H1 (cell line): ENCODE measurements at regions of chr3 and their contacts with region 1.

Region 1: GRCh38 chr3:51498876-51499738 is 708 bp downstream of the DCAF1 start:
- DNase-seq: peak; percentile 87 to 96
- H3K4me3 ChIP-seq: peak overlapping the region; percentile 69 to 84 (median 75)
- H3K27ac ChIP-seq: peak overlapping the region; percentile 88
- H3K4me1 ChIP-seq: no peaks in the 10 kb centered on the region
- H3K27me3 ChIP-seq: 0 out of 7 replicates have a peak, but pooled peaks cover 0 to 2% (median 0%) of the 10 kb centered on the region in 4 experiments
- CTCF ChIP-seq: no peak
- EP300 ChIP-seq: 0 out of 3 replicates have a peak, but pooled peaks of 1 of the 2 experiments have one; percentile 31
- POLR2A ChIP-seq: peak in 1 of 2 experiments; percentile 88; a peak in 2 of 3 replicates
- RAD21 ChIP-seq: no peak

Region 2: DNA sequence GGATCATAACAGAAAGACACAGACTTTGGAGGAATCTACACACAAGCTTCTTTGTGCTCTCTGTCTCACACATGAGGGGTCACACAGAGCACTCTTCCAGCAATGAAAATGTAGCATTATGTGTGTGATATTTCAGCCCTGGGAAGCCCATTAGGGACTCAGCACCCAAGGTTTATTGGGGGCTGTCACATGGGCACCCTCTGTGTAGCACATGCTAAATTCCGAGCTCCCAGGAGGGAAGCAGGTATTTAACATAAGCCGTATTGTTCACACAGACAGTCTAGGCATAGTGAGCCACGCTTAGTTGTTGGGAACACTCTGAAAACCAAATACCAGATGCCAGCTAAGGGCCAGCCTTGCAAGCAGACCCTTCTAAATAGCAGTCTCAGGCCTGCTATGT is 375.6 kb before region 1 on chr3:
- CTCF ChIA-PET with region 1: no interaction called
- POLR2A ChIA-PET with region 1: no interaction called
- DNase-seq: no peak
- H3K4me3 ChIP-seq: no peak overlapping the region
- H3K27ac ChIP-seq: no peak overlapping the region
- H3K4me1 ChIP-seq: no peaks in the 10 kb centered on the region
- H3K27me3 ChIP-seq: no peaks in the 10 kb centered on the region
- CTCF ChIP-seq: no peak
- EP300 ChIP-seq: no peak
- POLR2A ChIP-seq: no peak
- RAD21 ChIP-seq: no peak

Region 3: GRCh38 chr3:51362476-51362875 is 136.6 kb before region 1 on chr3:
- CTCF ChIA-PET with region 1: no interaction called
- POLR2A ChIA-PET with region 1: no interaction called
- DNase-seq: no peak
- H3K4me3 ChIP-seq: no peak overlapping the region
- H3K27ac ChIP-seq: no peak overlapping the region
- H3K4me1 ChIP-seq: no peaks in the 10 kb centered on the region
- H3K27me3 ChIP-seq: no peaks in the 10 kb centered on the region
- CTCF ChIP-seq: no peak
- EP300 ChIP-seq: no peak
- POLR2A ChIP-seq: no peak
- RAD21 ChIP-seq: no peak

Region 4: GRCh38 chr3:51403675-51404074 is 95.4 kb before region 1 on chr3:
- CTCF ChIA-PET with region 1: no interaction called
- POLR2A ChIA-PET with region 1: no interaction called
- DNase-seq: no peak
- H3K4me3 ChIP-seq: no peak overlapping the region
- H3K27ac ChIP-seq: no peak overlapping the region
- H3K4me1 ChIP-seq: no peaks in the 10 kb centered on the region
- H3K27me3 ChIP-seq: no peaks in the 10 kb centered on the region
- CTCF ChIP-seq: no peak
- EP300 ChIP-seq: no peak
- POLR2A ChIP-seq: no peak
- RAD21 ChIP-seq: no peak

Region 5: DNA sequence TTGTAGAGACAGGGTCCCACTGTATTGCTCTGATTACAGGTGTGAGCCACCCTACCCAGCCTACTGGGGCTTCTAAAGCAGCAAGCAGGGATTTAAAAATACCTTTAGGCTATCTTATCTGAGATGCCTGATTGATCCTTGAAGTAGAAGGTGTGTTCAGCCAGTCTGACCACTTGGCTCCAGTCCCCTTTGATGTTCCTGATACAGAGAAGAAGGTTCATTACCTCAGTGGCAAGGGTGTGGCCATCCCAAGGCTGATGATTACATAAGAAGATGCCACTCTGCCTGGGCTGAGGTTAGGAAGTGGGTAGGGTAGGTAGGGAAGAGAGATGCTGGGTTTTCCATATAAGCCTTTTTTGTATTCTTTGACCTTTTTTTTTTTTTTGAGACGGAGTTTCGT is 11.9 kb after region 1 on chr3:
- CTCF ChIA-PET with region 1: interaction called, 29 read pairs
- POLR2A ChIA-PET with region 1: interaction called, 10 read pairs
- DNase-seq: no peak
- H3K4me3 ChIP-seq: no peak overlapping the region
- H3K27ac ChIP-seq: no peak overlapping the region
- H3K4me1 ChIP-seq: no peaks in the 10 kb centered on the region
- H3K27me3 ChIP-seq: no peaks in the 10 kb centered on the region
- CTCF ChIP-seq: no peak
- EP300 ChIP-seq: no peak
- POLR2A ChIP-seq: no peak
- RAD21 ChIP-seq: no peak

Region 6: GRCh38 chr3:51538459-51539290 is 39.6 kb after region 1 on chr3 and contains the start of gene RAD54L2:
- CTCF ChIA-PET with region 1: interaction called, 18 read pairs
- POLR2A ChIA-PET with region 1: interaction called, 21 read pairs
- DNase-seq: peak; percentile 33 to 90
- H3K4me3 ChIP-seq: peak within 1 kb of the TSS; percentile 59 to 99 (median 92)
- H3K27ac ChIP-seq: peak within 1 kb of the TSS; percentile 73; the same call in 1 of the 2 replicates
- H3K4me1 ChIP-seq: peaks cover 0 to 7% (median 3%) of the 10 kb centered on the region in 4 experiments; a peak in 5 of 7 replicates
- H3K27me3 ChIP-seq: no peaks in the 10 kb centered on the region
- CTCF ChIP-seq: peak in 1 of 3 experiments; percentile 27; a peak in 2 of 4 replicates
- EP300 ChIP-seq: peak in 1 of 2 experiments; percentile 50; a peak in 1 of 3 replicates
- POLR2A ChIP-seq: peak; percentile 57 to 88
- RAD21 ChIP-seq: no peak
- total RNA-seq, gene RAD54L2: 32.6 and 35.2 TPM in 2 replicates

Region 7: DNA sequence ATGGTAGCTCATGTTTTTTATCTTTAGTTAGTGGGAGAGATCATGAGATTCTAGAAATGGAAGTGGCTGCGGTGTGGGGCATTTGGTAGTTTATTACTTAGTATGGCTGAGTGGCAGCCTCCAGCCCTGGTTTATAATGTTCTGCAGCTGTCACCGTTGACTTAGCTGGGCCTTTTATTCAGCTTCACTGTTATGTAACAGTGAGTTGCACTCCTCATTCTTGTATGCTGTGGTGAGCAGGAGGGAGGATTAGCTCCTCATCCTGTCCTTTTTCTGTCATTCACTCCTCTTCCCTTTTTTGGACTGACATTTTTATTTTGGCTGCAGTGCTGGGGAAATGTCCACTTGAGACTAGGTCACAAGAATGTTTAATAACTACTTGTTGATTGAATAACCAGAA is 68.9 kb after region 1 on chr3:
- CTCF ChIA-PET with region 1: interaction called, 11 read pairs
- POLR2A ChIA-PET with region 1: no interaction called
- DNase-seq: no peak
- H3K4me3 ChIP-seq: no peak overlapping the region
- H3K27ac ChIP-seq: no peak overlapping the region
- H3K4me1 ChIP-seq: no peaks in the 10 kb centered on the region
- H3K27me3 ChIP-seq: no peaks in the 10 kb centered on the region
- CTCF ChIP-seq: no peak
- EP300 ChIP-seq: no peak
- POLR2A ChIP-seq: no peak
- RAD21 ChIP-seq: no peak

Region 8: DNA sequence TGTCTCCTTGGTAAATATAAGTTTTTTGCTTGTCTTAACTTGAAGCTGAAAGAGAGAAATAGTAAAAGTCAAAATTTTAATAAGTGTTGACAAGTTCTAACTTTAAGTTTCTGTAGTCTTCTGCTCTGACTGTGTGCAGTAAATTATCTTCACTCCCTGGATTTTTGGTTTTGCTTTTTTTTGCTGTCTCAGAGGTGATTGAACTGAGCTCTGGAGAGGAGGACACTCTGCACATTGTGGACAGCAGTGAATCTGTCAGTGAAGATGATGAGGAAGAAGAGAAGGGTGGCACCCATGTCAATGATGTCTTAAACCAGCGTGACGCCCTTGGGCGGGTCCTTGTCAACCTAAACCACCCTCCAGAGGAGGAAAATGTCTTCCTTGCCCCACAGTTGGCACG is 131.4 kb after region 1 on chr3:
- CTCF ChIA-PET with region 1: interaction called, 103 read pairs
- POLR2A ChIA-PET with region 1: interaction called, 3 read pairs
- DNase-seq: no peak
- H3K4me3 ChIP-seq: no peak overlapping the region
- H3K27ac ChIP-seq: no peak overlapping the region
- H3K4me1 ChIP-seq: no peaks in the 10 kb centered on the region
- H3K27me3 ChIP-seq: no peaks in the 10 kb centered on the region
- CTCF ChIP-seq: no peak
- EP300 ChIP-seq: no peak
- POLR2A ChIP-seq: no peak
- RAD21 ChIP-seq: no peak

Region 9: DNA sequence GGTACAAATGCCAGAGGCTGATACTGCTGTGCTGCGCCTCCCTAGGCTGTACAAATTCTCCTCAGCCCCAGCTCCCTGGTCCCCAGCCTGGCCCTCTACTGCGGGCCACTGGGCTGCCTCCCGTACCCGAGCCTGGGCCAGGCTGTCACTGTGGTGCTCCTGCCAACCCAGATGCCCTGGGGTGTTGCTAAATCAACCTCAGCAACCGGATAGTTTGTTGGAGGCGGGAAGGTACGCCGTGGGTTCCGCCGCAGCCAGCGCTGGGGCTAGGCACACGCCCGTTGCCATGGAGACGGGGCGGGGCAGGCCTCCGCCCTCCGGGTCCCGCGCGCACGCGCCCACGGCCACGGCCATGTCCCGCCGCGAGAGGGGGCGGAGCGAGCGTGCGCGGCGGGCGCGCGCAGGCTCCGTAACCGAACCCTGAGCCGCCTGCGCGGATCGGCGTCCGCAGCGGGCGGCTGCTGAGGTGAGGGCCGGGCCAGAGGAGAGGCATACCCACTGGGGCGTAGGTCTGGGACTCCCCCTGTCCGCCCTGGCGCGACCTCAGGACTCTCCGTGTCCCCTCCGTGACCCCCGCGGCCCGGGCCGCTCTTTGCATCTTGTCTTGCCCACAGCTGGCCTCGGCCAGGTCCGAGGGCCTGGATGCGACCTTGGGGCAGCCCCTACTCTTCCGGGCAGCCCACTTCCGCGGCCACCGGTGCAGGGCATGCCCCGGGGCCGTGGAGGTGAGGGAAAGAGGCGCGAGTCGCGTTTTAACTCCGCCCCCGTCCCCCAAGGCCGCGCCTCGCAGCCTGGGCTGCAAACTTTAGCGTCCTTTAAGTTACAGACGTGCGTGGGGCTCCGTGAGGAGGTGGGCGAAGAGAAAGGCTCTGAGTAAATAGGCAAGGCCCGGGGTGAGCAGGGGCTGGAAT is 172.0 kb after region 1 on chr3 and contains the start of gene TEX264:
- CTCF ChIA-PET with region 1: interaction called, 137 read pairs
- POLR2A ChIA-PET with region 1: interaction called, 13 read pairs
- DNase-seq: peak in 1 of 2 experiments; percentile 82
- H3K4me3 ChIP-seq: peak within 1 kb of the TSS; percentile 59 to 82 (median 69)
- H3K27ac ChIP-seq: no peak within 1 kb of the TSS
- H3K4me1 ChIP-seq: peaks cover 0 to 10% (median 5%) of the 10 kb centered on the region in 4 experiments; a peak in 4 of 7 replicates
- H3K27me3 ChIP-seq: no peaks in the 10 kb centered on the region
- CTCF ChIP-seq: no peak
- EP300 ChIP-seq: no peak
- POLR2A ChIP-seq: peak in 1 of 2 experiments; percentile 12; a peak in 1 of 3 replicates
- RAD21 ChIP-seq: no peak
- total RNA-seq, gene TEX264: 11.2 and 11.9 TPM in 2 replicates